Endothelial cell of umbilical vein (primary cell): ENCODE measurements at regions of chrX and their contacts with region 1.

Region 1: GRCh38 chrX:108199691-108200090 is 108.1 kb downstream of the ATG4A start:
- DNase-seq: peak; percentile 44
- H3K4me3 ChIP-seq: no peak overlapping the region
- H3K27ac ChIP-seq: no peak overlapping the region
- H3K4me1 ChIP-seq: no peaks in the 10 kb centered on the region
- H3K27me3 ChIP-seq: no peaks in the 10 kb centered on the region
- CTCF ChIP-seq: peak; percentile 47 to 48
- POLR2A ChIP-seq: no peak

Region 2: GRCh38 chrX:108165383-108166111 is 34.1 kb before region 1 on chrX:
- CTCF ChIA-PET with region 1: interaction called, 12 read pairs
- POLR2A ChIA-PET with region 1: no interaction called
- dilution Hi-C with region 1: no loop called
- intact Hi-C with region 1: no loop called
- DNase-seq: peak; percentile 12
- H3K4me3 ChIP-seq: no peak overlapping the region
- H3K27ac ChIP-seq: no peak overlapping the region
- H3K4me1 ChIP-seq: peaks cover 7% of the 10 kb centered on the region
- H3K27me3 ChIP-seq: no peaks in the 10 kb centered on the region
- CTCF ChIP-seq: peak; percentile 13 to 41
- POLR2A ChIP-seq: no peak

Region 3: DNA sequence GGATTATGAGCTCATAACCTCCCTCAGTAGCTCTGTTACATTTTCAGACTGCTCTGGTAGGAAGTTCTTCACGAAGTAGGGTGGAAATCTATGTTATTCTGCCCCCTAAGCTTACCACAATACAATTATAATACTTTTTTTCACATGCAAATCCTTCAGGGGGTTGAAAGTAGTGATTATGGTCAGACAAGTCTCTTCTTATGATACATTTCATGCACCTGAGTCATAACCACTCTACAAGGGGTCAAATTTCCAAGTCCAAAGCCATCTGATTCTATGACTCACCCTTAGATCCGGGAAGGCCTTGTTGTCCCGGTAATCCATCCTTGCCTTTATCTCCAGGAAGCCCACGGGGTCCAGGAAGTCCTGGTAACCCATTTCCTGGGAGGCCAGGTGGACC is 12.9 kb before region 1 on chrX:
- CTCF ChIA-PET with region 1: interaction called, 10 read pairs
- POLR2A ChIA-PET with region 1: no interaction called
- dilution Hi-C with region 1: no loop called
- intact Hi-C with region 1: no loop called
- DNase-seq: peak; percentile 8
- H3K4me3 ChIP-seq: no peak overlapping the region
- H3K27ac ChIP-seq: no peak overlapping the region
- H3K4me1 ChIP-seq: peaks cover 5% of the 10 kb centered on the region
- H3K27me3 ChIP-seq: no peaks in the 10 kb centered on the region
- CTCF ChIP-seq: no peak
- POLR2A ChIP-seq: no peak

Region 4: DNA sequence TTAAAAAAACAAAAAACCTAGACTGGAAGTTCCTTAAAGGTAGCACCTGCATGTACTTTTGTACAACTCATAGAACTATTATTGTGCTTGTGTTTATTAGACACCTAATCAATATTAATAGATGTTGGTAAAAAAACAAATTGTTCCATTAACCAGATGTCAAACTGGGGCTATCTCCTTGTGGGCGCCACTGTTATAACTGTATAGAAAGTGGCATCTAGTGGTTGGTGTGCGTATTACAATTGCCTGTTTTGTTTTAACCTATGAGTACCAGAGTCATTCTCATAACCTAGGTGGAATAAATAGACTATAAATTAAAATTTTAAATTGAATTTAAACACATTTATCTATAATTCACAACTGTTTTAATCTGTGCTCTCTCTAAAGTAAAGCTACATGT is 337.3 kb after region 1 on chrX:
- CTCF ChIA-PET with region 1: interaction called, 10 read pairs
- POLR2A ChIA-PET with region 1: no interaction called
- dilution Hi-C with region 1: no loop called
- intact Hi-C with region 1: no loop called
- DNase-seq: peak; percentile 47
- H3K4me3 ChIP-seq: no peak overlapping the region
- H3K27ac ChIP-seq: no peak overlapping the region
- H3K4me1 ChIP-seq: no peaks in the 10 kb centered on the region
- H3K27me3 ChIP-seq: no peaks in the 10 kb centered on the region
- CTCF ChIP-seq: peak; percentile 29 to 37
- POLR2A ChIP-seq: no peak

Region 5: DNA sequence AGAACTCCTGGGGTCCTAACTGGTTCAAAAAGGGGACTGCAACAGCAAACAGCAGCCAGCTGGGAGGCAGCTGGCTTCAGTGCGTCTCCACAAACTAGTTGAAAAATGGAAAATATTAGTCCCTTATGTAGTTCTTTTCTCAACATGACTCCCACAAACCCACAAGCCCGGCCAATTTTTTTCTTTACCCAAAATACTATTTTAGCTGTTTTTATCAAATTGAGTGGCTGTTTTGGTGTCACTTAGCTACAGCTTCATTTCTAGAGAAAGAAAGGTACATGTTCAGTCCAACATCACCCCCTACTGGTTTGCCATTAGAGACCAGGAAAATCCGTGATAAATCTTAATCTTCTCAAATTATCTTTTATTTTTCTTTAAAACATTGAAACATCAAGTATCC is 1185.0 kb after region 1 on chrX:
- CTCF ChIA-PET with region 1: interaction called, 22 read pairs
- POLR2A ChIA-PET with region 1: no interaction called
- dilution Hi-C with region 1: no loop called
- intact Hi-C with region 1: loop called (anchors 5 kb)
- DNase-seq: peak; percentile 28
- H3K4me3 ChIP-seq: no peak overlapping the region
- H3K27ac ChIP-seq: no peak overlapping the region
- H3K4me1 ChIP-seq: no peaks in the 10 kb centered on the region
- H3K27me3 ChIP-seq: peaks cover 0 to 1% of the 10 kb centered on the region in 2 experiments
- CTCF ChIP-seq: peak; percentile 10 to 29
- POLR2A ChIP-seq: no peak